ENCODE measurements at regions of chr6 and their contacts with region 1.

Region 1: DNA sequence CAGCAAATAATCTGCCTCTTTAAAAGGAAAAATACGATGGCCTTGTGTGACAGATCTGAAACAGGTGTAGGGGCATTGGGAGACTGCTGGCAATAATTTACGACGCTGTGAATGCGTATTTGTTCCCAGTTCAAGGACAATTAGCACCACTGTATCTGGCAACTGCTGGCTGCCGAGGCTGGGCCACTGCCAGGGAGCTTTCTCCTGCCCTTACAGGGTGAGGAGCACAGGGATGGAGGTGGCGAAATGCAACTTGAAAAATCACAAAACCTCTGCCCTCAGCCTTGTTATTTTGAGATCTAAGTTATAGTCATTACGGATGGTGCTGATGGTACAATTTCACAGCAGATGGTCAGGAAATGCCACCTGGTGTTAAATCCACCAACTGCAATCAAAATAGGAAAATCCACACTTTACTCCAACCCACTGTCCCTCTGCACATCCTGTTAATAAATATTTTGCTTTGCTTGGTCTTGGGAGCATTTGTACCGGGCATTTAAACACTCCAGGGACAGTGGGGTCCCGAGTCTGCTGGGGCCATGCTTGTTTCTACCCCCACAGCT is 6.4 kb downstream of the MYLK4 start:
- DNase-seq: no peak
- H3K4me3 ChIP-seq: no peak overlapping the region
- CTCF ChIP-seq: peak; percentile 31

Region 2: DNA sequence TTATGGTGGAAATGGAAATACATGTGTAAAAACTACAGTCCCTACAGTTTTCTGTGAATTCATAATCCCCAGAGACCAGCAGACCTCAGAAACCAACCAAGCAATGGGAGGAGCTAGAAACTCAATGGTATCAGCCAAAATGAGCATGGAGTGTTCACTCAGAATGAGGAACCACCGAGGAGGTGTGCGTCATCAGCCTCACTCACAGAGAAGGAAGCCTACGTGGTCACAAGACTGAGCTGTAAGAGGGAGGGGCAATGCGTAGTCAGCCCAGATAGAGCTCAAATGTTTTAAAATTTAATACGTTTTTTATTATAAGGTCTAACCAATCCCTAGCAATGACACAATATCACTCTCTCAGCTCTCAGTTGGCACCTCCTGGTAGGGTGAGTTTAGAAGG is 11.0 kb before region 1 on chr6:
- CTCF ChIA-PET with region 1: interaction called, 143 read pairs
- POLR2A ChIA-PET with region 1: no interaction called
- DNase-seq: no peak
- H3K4me3 ChIP-seq: no peak overlapping the region
- CTCF ChIP-seq: no peak

Measured in AG04449 (cell line).